ENCODE measurements at regions of chr3 and their contacts with region 1.

Region 1: GRCh38 chr3:149115114-149115513 is 14.3 kb upstream of the HPS3 start:
- DNase-seq: no peak
- ATAC-seq: no peak
- H3K4me3 ChIP-seq: no peak overlapping the region
- H3K4me3 Mint-ChIP-seq: no peak overlapping the region
- H3K27ac ChIP-seq: no peak overlapping the region
- H3K27ac Mint-ChIP-seq: no peak overlapping the region
- H3K4me1 ChIP-seq: no peaks in the 10 kb centered on the region
- H3K4me1 Mint-ChIP-seq: no peaks in the 10 kb centered on the region
- H3K27me3 ChIP-seq: no peaks in the 10 kb centered on the region
- H3K27me3 Mint-ChIP-seq: no peaks in the 10 kb centered on the region
- CTCF ChIP-seq: no peak

Region 2: DNA sequence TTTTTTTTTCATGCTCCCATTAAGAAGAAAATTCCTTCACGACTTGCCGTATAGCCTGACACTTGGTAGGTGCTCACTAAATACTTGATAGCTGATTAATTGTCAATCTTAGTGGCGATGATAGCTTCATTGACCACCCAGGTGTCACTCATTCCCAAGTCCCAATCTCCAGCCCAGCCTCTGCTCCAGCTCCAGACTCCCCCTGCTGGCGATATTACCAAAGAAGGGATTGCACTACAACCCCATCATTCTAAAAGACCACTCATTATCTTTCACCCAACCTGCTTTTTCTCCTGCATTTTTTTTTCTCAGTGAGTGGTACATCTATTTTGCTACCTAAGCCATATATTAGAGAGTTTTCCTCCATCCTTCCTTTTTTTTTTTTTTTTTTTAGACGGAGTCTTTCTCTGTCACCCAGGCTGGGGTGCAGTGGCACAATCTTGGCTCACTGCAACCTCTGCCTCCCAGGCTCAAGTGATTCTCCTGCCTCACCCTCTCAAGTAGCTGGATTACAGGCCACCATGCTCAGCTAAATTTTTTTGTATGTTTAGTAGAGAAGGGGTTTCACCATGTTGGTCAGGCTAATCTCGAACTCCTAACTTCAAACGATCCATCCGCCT is 656.6 kb after region 1 on chr3:
- CTCF ChIA-PET with region 1: no interaction called
- POLR2A ChIA-PET with region 1: no interaction called
- intact Hi-C with region 1: loop called (anchors 2 to 5 kb)
- DNase-seq: peak in 10 of 14 experiments; percentile 1 to 58 (median 10)
- ATAC-seq: no peak
- H3K4me3 ChIP-seq: no peak overlapping the region
- H3K4me3 Mint-ChIP-seq: no peak overlapping the region
- H3K27ac ChIP-seq: no peak overlapping the region
- H3K27ac Mint-ChIP-seq: no peak overlapping the region
- H3K4me1 ChIP-seq: no peaks in the 10 kb centered on the region
- H3K4me1 Mint-ChIP-seq: no peaks in the 10 kb centered on the region
- H3K27me3 ChIP-seq: peaks cover 0 to 5% of the 10 kb centered on the region in 2 experiments
- H3K27me3 Mint-ChIP-seq: peaks cover 19% of the 10 kb centered on the region
- CTCF ChIP-seq: peak; percentile 68

Measured in CD4-positive, alpha-beta T cell (primary cell).